Calu3 (cell line): ENCODE measurements at regions of chr4 and their contacts with region 1.

Region 1: GRCh38 chr4:141711014-141711610 is 74.7 kb downstream of the IL15 start:
- DNase-seq: peak; percentile 3
- H3K4me3 Mint-ChIP-seq: no peak overlapping the region
- H3K27ac Mint-ChIP-seq: no peak overlapping the region
- H3K4me1 Mint-ChIP-seq: peaks cover 29% of the 10 kb centered on the region
- H3K27me3 Mint-ChIP-seq: no peaks in the 10 kb centered on the region
- CTCF ChIP-seq: peak; percentile 43

Region 2: GRCh38 chr4:141375855-141376254 is 335.3 kb before region 1 on chr4:
- CTCF ChIA-PET with region 1: no interaction called
- intact Hi-C with region 1: loop called (anchors 10 kb)
- DNase-seq: peak; percentile 63
- H3K4me3 Mint-ChIP-seq: peak overlapping the region; percentile 29
- H3K27ac Mint-ChIP-seq: peak overlapping the region; percentile 57
- H3K4me1 Mint-ChIP-seq: peaks cover 13% of the 10 kb centered on the region
- H3K27me3 Mint-ChIP-seq: no peaks in the 10 kb centered on the region
- CTCF ChIP-seq: peak; percentile 12

Region 3: GRCh38 chr4:141853091-141853764 is 142.1 kb after region 1 on chr4:
- CTCF ChIA-PET with region 1: no interaction called
- intact Hi-C with region 1: loop called (anchors 10 kb)
- DNase-seq: peak; percentile 62
- H3K4me3 Mint-ChIP-seq: peak overlapping the region; percentile 33
- H3K27ac Mint-ChIP-seq: peak overlapping the region; percentile 63
- H3K4me1 Mint-ChIP-seq: peaks cover 46% of the 10 kb centered on the region
- H3K27me3 Mint-ChIP-seq: no peaks in the 10 kb centered on the region
- CTCF ChIP-seq: no peak